H1 (cell line): ENCODE measurements at regions of chr11 and their contacts with region 1.

Region 1: DNA sequence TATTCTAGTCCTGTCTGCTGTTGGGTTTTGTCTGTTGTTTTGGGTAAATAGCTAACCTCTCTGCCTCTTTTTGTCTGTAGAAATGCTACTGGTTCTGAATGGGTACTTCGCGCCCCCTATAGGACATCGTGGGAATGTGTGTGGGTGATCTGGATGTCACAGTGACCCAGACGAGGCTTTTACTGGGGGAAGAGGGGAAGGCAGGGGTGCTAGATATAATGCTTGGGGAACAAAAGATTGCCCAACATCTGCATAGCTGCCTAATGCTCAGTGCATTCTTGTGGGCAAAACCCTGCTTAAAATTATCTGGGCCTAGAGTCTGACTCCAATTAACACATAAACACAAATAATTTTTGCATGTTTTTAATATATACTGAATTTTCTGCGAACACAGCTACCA is 57.7 kb downstream of the BMAL1 start:
- DNase-seq: peak in 1 of 2 experiments; percentile 84
- H3K4me3 ChIP-seq: no peak overlapping the region
- H3K27ac ChIP-seq: no peak overlapping the region
- H3K4me1 ChIP-seq: peaks cover 0 to 2% (median 0%) of the 10 kb centered on the region in 4 experiments; a peak in 2 of 7 replicates
- H3K27me3 ChIP-seq: no peaks in the 10 kb centered on the region
- CTCF ChIP-seq: peak; percentile 72 to 93 (median 79)
- EP300 ChIP-seq: no peak
- POLR2A ChIP-seq: no peak
- RAD21 ChIP-seq: peak; percentile 83 to 92

Region 2: DNA sequence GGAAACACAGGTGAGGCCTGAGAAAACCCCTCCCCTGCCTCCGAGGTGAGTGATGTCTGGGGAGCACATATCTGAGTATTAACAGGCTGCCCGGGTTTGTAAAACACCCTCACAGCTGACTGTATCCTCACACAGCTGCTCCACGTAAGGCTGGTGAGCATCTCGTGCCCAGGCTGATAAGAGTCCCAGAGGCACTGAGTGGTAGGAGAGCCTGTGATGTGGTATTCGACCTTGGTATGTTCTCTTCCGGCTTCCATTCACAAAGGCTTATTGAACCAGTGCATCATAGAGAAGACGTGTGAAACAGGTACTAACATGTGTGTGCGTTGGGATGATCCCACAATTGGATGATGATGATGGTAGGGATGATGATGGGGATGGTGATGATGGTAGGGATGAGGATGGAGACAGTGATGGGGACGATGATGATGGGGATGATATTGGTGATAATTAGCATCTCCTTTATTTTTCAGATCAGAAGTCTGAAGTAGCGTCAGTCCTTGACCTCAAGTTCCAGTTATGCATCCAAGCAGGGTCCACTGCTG is 254.4 kb before region 1 on chr11:
- CTCF ChIA-PET with region 1: no interaction called
- POLR2A ChIA-PET with region 1: no interaction called
- DNase-seq: no peak
- H3K4me3 ChIP-seq: no peak overlapping the region
- H3K27ac ChIP-seq: no peak overlapping the region
- H3K4me1 ChIP-seq: no peaks in the 10 kb centered on the region
- H3K27me3 ChIP-seq: no peaks in the 10 kb centered on the region
- CTCF ChIP-seq: no peak
- EP300 ChIP-seq: no peak
- POLR2A ChIP-seq: no peak
- RAD21 ChIP-seq: no peak

Region 3: DNA sequence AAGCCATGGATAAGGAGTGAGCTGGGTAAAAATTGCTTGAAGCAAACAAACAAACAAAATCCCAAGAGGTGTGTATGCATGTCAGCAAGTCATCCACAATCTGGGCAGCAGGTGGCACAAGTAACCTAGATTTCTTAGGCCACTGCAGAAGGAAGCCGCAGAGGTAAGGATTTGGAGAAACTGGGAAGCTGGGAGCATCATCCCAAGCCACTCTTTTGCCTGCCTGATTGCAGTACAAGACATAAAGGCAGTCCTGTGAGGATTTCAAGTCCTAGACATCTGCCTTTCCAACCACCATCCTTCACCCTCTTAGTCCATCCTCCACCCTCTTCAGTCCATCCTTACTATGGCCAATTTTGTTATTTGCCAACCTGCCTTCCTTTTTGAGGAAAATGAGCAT is 124.9 kb before region 1 on chr11:
- CTCF ChIA-PET with region 1: interaction called, 98 read pairs
- POLR2A ChIA-PET with region 1: interaction called, 6 read pairs
- DNase-seq: peak; percentile 53 to 67
- H3K4me3 ChIP-seq: no peak overlapping the region
- H3K27ac ChIP-seq: no peak overlapping the region
- H3K4me1 ChIP-seq: peaks cover 2 to 10% (median 6%) of the 10 kb centered on the region in 4 experiments; a peak in 6 of 7 replicates
- H3K27me3 ChIP-seq: peaks cover 0 to 1% (median 0%) of the 10 kb centered on the region in 4 experiments; a peak in 1 of 7 replicates
- CTCF ChIP-seq: peak; percentile 29 to 91 (median 87)
- EP300 ChIP-seq: no peak
- POLR2A ChIP-seq: no peak
- RAD21 ChIP-seq: peak; percentile 93 to 97

Region 4: GRCh38 chr11:13249996-13250395 is 85.3 kb before region 1 on chr11:
- CTCF ChIA-PET with region 1: interaction called, 66 read pairs
- POLR2A ChIA-PET with region 1: no interaction called
- DNase-seq: no peak
- H3K4me3 ChIP-seq: no peak overlapping the region
- H3K27ac ChIP-seq: no peak overlapping the region
- H3K4me1 ChIP-seq: no peaks in the 10 kb centered on the region
- H3K27me3 ChIP-seq: no peaks in the 10 kb centered on the region
- CTCF ChIP-seq: peak in 2 of 3 experiments; percentile 31 to 40; a peak in 3 of 4 replicates
- EP300 ChIP-seq: no peak
- POLR2A ChIP-seq: no peak
- RAD21 ChIP-seq: peak; percentile 35 to 51; a peak in 3 of 4 replicates

Region 5: DNA sequence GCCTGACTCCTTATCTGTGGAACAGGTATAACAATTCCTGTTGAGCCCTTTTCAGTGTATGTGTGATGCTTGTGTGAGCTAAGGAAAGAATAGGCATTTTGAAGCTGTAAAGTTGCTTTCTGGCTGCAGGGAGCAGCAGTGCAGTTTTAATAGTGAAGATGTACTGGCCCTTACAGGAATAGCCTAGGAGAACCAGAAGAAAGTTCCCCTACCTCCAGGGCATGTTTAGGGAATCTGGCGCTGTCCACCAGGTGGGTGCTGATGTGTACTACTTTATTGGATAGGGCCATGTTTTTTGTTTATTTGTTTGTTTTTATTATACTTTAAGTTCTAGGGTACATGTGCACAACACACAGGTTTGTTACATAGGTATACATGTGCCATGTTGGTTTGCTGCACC is 46.2 kb before region 1 on chr11:
- CTCF ChIA-PET with region 1: interaction called, 25 read pairs
- POLR2A ChIA-PET with region 1: no interaction called
- DNase-seq: no peak
- H3K4me3 ChIP-seq: no peak overlapping the region
- H3K27ac ChIP-seq: no peak overlapping the region
- H3K4me1 ChIP-seq: no peaks in the 10 kb centered on the region
- H3K27me3 ChIP-seq: no peaks in the 10 kb centered on the region
- CTCF ChIP-seq: peak in 1 of 3 experiments; percentile 2; a peak in 1 of 4 replicates
- EP300 ChIP-seq: no peak
- POLR2A ChIP-seq: no peak
- RAD21 ChIP-seq: peak; percentile 38 to 44

Region 6: GRCh38 chr11:13316528-13316961 is 18.8 kb before region 1 on chr11:
- CTCF ChIA-PET with region 1: interaction called, 31 read pairs
- POLR2A ChIA-PET with region 1: no interaction called
- DNase-seq: no peak
- H3K4me3 ChIP-seq: no peak overlapping the region
- H3K27ac ChIP-seq: no peak overlapping the region
- H3K4me1 ChIP-seq: peaks cover 0 to 11% (median 4%) of the 10 kb centered on the region in 4 experiments; a peak in 5 of 7 replicates
- H3K27me3 ChIP-seq: no peaks in the 10 kb centered on the region
- CTCF ChIP-seq: no peak
- EP300 ChIP-seq: no peak
- POLR2A ChIP-seq: no peak
- RAD21 ChIP-seq: no peak

Region 7: GRCh38 chr11:13354335-13354734 is 19.0 kb after region 1 on chr11:
- CTCF ChIA-PET with region 1: interaction called, 25 read pairs
- POLR2A ChIA-PET with region 1: no interaction called
- DNase-seq: no peak
- H3K4me3 ChIP-seq: no peak overlapping the region
- H3K27ac ChIP-seq: no peak overlapping the region
- H3K4me1 ChIP-seq: peaks cover 0 to 4% (median 0%) of the 10 kb centered on the region in 4 experiments; a peak in 2 of 7 replicates
- H3K27me3 ChIP-seq: no peaks in the 10 kb centered on the region
- CTCF ChIP-seq: peak in 2 of 3 experiments; percentile 64; a peak in 3 of 4 replicates
- EP300 ChIP-seq: no peak
- POLR2A ChIP-seq: no peak
- RAD21 ChIP-seq: peak; percentile 52 to 62